ENCODE measurements at regions of chr9 and their contacts with region 1.

Region 1: GRCh38 chr9:88936668-88937067 is 54.6 kb upstream of the S1PR3 start:
- DNase-seq: no peak
- ATAC-seq: no peak
- H3K4me3 ChIP-seq: no peak overlapping the region
- H3K27ac ChIP-seq: no peak overlapping the region
- H3K4me1 ChIP-seq: peaks cover 0 to 15% (median 0%) of the 10 kb centered on the region in 12 donors
- H3K27me3 ChIP-seq: no peaks in the 10 kb centered on the region
- CTCF ChIP-seq: no peak
- POLR2A ChIP-seq: no peak

Region 2: GRCh38 chr9:88975966-88976889 is 39.6 kb after region 1 on chr9:
- intact Hi-C with region 1: loop called in 1 of 10 experiments (anchors 5 kb)
- DNase-seq: peak in 1 of 5 donors; percentile 10
- ATAC-seq: peak in 1 of 4 donors; percentile 15
- H3K4me3 ChIP-seq: no peak overlapping the region
- H3K27ac ChIP-seq: no peak overlapping the region
- H3K4me1 ChIP-seq: peaks cover 0 to 17% (median 1%) of the 10 kb centered on the region in 12 donors
- H3K27me3 ChIP-seq: peaks cover 0 to 4% (median 0%) of the 10 kb centered on the region in 9 donors
- CTCF ChIP-seq: no peak
- POLR2A ChIP-seq: no peak

Measured in heart left ventricle (tissue), 16 donors.